ENCODE measurements at regions of chr6 and their contacts with region 1.

Region 1: DNA sequence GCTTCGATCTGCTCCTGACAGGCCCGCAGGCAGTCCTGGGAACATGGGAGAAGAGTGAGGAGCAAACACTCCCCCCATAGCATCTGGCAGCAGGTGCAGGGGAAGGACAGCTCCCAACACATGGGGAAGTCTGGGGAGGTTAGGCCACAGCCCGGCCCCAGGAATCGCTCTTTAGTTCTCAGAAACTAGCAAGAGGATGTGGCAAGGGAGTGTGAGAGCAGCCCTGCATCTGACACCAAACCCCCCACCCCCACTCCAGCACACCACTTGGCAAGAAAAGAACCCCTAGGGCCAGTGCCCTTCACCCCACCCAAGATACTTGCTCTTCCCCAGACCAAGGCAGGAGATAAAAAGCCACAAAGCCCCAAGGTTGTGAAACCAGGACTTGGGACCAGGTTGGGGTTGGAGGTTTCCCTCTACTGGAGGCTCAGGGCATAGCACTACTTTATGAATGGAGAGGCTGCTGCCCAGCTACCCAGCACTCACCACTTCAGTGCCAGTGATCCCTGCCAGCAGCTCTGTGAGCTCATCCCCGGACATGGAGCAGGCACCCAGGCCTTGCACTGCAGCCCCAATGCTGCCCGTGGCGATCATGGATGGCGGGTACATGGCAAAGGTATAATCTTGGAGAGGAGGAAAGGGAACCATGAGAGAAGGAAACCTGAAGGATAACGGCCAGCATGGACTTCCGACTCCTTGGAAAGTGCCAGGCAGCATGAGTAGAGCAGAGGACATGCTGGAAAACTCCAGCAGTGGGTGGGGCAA is 5.4 kb downstream of the CCND3 start:
- DNase-seq: peak; percentile 72 to 84
- ATAC-seq: peak; percentile 69 to 73
- H3K4me3 ChIP-seq: 0 out of 3 replicates have a peak overlapping the region, but pooled peaks have one; percentile 14
- H3K27ac ChIP-seq: peak overlapping the region; percentile 93 to 99
- H3K4me1 ChIP-seq: peaks cover 61% of the 10 kb centered on the region
- CTCF ChIP-seq: peak; percentile 47
- EP300 ChIP-seq: no peak
- POLR2A ChIP-seq: no peak
- RAD21 ChIP-seq: peak; percentile 50 to 60

Region 2: GRCh38 chr6:41846666-41847237 is 89.5 kb before region 1 on chr6:
- CTCF ChIA-PET with region 1: interaction called, 17 read pairs
- POLR2A ChIA-PET with region 1: no interaction called
- DNase-seq: peak; percentile 55 to 79
- ATAC-seq: peak; percentile 96 to 98
- H3K4me3 ChIP-seq: no peak overlapping the region
- H3K27ac ChIP-seq: peak overlapping the region; percentile 71 to 87
- H3K4me1 ChIP-seq: peaks cover 15% of the 10 kb centered on the region
- CTCF ChIP-seq: peak; percentile 60
- EP300 ChIP-seq: no peak
- POLR2A ChIP-seq: no peak
- RAD21 ChIP-seq: peak; percentile 72 to 84

Region 3: DNA sequence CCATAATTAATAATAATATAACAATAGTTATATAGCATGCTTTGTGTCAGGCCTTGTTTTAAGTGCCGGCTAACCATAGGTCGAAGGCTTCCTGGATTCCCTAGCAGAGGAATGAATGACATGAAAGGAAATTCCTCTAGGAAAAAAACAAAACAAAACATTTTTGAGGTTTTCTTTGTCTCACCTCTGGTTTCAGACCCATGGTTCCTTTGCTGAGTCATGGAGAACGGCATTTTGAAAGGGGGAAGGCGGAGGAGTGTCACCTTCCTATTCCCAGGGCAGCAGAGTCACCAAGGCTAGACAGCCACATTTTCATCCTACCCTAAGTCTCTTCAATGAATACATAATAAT is 30.7 kb after region 1 on chr6:
- CTCF ChIA-PET with region 1: interaction called, 11 read pairs
- POLR2A ChIA-PET with region 1: interaction called, 11 read pairs
- DNase-seq: peak; percentile 50 to 84
- ATAC-seq: peak; percentile 65 to 70
- H3K4me3 ChIP-seq: peak overlapping the region; percentile 31; the same call in 2 of the 3 replicates
- H3K27ac ChIP-seq: peak overlapping the region; percentile 95 to 97
- H3K4me1 ChIP-seq: peaks cover 80% of the 10 kb centered on the region
- CTCF ChIP-seq: no peak
- EP300 ChIP-seq: no peak
- POLR2A ChIP-seq: no peak
- RAD21 ChIP-seq: no peak